Astrocyte of the cerebellum (primary cell): ENCODE measurements at regions of chr12 and their contacts with region 1.

Region 1: DNA sequence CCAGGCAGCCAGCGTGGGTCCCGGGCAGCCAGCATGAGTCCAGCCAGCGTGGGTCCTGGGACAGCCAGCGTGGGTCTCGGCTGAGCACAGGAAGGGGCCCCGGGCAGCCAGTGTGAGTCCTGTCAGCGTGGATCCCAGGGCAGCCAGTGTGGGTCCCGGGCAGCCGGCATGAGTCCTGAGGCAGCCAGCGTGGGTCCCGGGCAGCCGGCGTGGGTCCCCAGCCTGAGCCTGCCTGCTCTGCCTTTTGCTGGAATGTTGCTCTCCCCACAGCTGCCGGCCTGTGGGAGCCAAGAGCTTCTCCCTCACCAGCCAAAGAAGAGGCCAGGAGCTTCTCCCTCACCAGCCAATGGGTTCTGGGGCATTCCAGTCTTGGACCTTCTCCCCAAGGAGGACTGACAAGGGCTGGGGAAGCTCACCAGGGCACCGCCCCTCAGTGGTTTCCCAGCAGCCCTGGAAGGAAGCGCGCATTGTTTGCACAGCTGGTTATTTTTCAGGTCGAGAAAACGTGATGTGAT is 15.0 kb upstream of the RFLNA start:
- DNase-seq: no peak
- H3K4me3 ChIP-seq: no peak overlapping the region
- CTCF ChIP-seq: no peak

Region 2: GRCh38 chr12:124240493-124240892 is 39.4 kb before region 1 on chr12:
- in situ Hi-C with region 1: loop called (anchors 5 kb)
- DNase-seq: no peak
- H3K4me3 ChIP-seq: no peak overlapping the region
- CTCF ChIP-seq: no peak